Breast epithelium (tissue), 4 donors: ENCODE measurements at regions of chr15 and their contacts with region 1.

Region 1: GRCh38 chr15:65765106-65765505 is 27.0 kb downstream of the DENND4A start:
- DNase-seq: no peak
- H3K4me3 ChIP-seq: no peak overlapping the region
- H3K27ac ChIP-seq: no peak overlapping the region
- H3K4me1 ChIP-seq: no peaks in the 10 kb centered on the region
- H3K27me3 ChIP-seq: no peaks in the 10 kb centered on the region
- CTCF ChIP-seq: no peak
- POLR2A ChIP-seq: no peak

Region 2: GRCh38 chr15:65822316-65822715 is 57.2 kb after region 1 on chr15:
- intact Hi-C with region 1: loop called (anchors 2 kb)
- DNase-seq: no peak
- H3K4me3 ChIP-seq: no peak overlapping the region
- H3K27ac ChIP-seq: no peak overlapping the region
- H3K4me1 ChIP-seq: no peaks in the 10 kb centered on the region
- H3K27me3 ChIP-seq: no peaks in the 10 kb centered on the region
- CTCF ChIP-seq: no peak
- POLR2A ChIP-seq: no peak

Region 3: DNA sequence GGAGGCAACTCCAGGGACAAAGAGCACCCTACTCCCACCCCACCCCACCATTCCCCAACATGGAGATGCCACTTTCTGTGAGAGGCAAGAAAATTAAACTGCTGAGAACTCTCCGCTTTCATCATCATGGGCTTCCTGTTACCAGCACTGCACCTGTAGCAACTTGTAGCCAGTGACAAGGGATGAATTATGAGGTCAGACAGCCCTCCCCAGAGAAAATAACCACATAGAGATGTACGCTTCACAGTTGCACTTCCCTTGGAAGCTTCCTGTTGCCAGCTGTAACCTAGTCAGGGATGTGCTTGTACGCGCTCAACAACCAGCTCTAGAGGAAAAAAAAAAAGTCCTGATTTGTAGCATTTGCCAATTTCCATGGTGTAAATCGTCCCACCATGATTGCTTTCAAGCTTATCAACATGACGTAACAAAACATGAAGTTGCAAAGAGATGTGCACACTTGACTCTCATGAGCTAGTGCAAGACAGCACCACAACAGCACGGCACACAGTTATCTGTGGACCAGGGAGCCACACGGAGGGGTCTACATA is 249.6 kb after region 1 on chr15:
- intact Hi-C with region 1: no loop called
- DNase-seq: no peak
- H3K4me3 ChIP-seq: no peak overlapping the region
- H3K27ac ChIP-seq: no peak overlapping the region
- H3K4me1 ChIP-seq: no peaks in the 10 kb centered on the region
- H3K27me3 ChIP-seq: no peaks in the 10 kb centered on the region
- CTCF ChIP-seq: no peak
- POLR2A ChIP-seq: no peak

Region 4: DNA sequence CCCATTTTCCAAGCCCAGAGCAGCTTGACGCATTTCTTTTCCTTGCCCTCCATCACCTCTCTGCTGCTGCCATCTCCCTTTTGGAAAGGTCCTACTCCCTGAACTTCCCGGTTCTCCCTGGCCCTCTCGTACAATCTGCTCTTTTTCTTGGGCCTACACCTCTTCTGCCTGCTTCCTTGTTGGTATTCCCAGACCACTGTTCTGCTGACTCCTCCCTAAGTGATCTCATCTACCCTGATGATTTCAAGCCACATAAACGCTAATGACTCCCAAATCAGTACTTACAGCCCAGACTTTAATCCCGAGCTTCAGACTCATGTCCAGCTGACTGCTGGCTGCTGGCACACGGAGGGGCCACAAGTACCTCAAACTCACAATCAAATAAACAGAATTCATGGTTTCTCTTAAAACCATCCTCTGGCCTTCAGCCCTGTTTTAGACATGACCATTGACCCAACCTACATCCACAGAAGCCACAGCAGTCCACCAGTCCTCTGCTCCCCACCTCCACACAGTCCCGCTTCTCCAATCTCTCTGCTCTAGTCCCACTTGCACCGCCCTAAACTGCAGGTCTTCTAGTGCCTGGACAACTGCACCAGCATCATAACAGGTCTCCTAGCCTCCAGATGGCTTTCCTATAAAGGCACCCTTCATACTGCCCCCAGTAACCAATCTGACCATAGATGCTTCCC is 1431.7 kb after region 1 on chr15:
- intact Hi-C with region 1: no loop called
- DNase-seq: no peak
- H3K4me3 ChIP-seq: no peak overlapping the region
- H3K27ac ChIP-seq: peak overlapping the region; percentile 31 to 78
- H3K4me1 ChIP-seq: no peaks in the 10 kb centered on the region
- H3K27me3 ChIP-seq: no peaks in the 10 kb centered on the region
- CTCF ChIP-seq: no peak
- POLR2A ChIP-seq: no peak